AG04450 (cell line): ENCODE measurements at regions of chr6 and their contacts with region 1.

Region 1: GRCh38 chr6:25788305-25788922 is 33.9 kb downstream of the SLC17A4 start:
- DNase-seq: peak; percentile 13
- H3K4me3 ChIP-seq: no peak overlapping the region
- H3K27ac ChIP-seq: no peak overlapping the region
- H3K27me3 ChIP-seq: no peaks in the 10 kb centered on the region
- CTCF ChIP-seq: peak; percentile 62

Region 2: GRCh38 chr6:25629198-25629576 is 159.2 kb before region 1 on chr6:
- CTCF ChIA-PET with region 1: no interaction called
- POLR2A ChIA-PET with region 1: no interaction called
- DNase-seq: no peak
- H3K4me3 ChIP-seq: no peak overlapping the region
- H3K27ac ChIP-seq: no peak overlapping the region
- H3K27me3 ChIP-seq: no peaks in the 10 kb centered on the region
- CTCF ChIP-seq: no peak

Region 3: GRCh38 chr6:25942561-25943147 is 154.2 kb after region 1 on chr6:
- CTCF ChIA-PET with region 1: interaction called, 10 read pairs
- POLR2A ChIA-PET with region 1: no interaction called
- DNase-seq: no peak
- H3K4me3 ChIP-seq: no peak overlapping the region
- H3K27ac ChIP-seq: no peak overlapping the region
- H3K27me3 ChIP-seq: peaks cover 2% of the 10 kb centered on the region
- CTCF ChIP-seq: peak; percentile 59